GM18951 (cell line): ENCODE measurements at regions of chr20 and their contacts with region 1.

Region 1: DNA sequence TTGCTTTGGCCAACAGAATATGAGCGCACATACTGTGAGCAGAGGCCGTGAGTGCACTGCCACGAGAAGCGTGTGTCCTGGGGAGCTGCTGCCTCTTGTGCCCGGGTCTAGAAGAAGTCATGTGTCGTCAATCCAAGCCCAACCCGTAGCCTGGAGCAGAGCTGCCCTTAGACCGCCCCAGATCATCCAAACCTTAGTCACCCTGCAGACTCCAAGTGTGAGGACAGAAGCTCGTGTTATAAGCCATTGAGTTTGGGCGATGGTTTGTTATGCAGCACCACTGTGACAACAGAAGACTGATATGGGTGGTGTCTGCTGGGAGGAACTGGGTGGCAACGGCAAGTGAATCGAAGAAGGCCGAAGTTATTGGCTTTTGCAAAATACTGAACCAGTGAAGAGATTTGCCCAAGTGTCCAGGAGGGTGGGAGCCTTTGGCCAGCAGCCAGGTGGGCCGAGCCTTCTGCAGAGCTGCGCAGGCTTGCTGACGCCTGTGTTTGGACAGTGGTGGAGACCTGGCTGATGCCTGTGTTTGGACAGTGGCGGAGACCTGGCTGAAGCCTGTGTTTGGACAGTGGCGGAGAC is 101.3 kb upstream of the SULF2 start:
- POLR2A ChIP-seq: no peak

Region 2: GRCh38 chr20:47839200-47839599 is 47.4 kb before region 1 on chr20:
- in situ Hi-C with region 1: loop called (anchors 10 kb)
- POLR2A ChIP-seq: no peak

Region 3: GRCh38 chr20:48523212-48523941 is 636.8 kb after region 1 on chr20:
- in situ Hi-C with region 1: loop called (anchors 10 kb)
- POLR2A ChIP-seq: no peak